Gastrocnemius medialis (tissue), 4 donors: ENCODE measurements at regions of chr18 and their contacts with region 1.

Region 1: DNA sequence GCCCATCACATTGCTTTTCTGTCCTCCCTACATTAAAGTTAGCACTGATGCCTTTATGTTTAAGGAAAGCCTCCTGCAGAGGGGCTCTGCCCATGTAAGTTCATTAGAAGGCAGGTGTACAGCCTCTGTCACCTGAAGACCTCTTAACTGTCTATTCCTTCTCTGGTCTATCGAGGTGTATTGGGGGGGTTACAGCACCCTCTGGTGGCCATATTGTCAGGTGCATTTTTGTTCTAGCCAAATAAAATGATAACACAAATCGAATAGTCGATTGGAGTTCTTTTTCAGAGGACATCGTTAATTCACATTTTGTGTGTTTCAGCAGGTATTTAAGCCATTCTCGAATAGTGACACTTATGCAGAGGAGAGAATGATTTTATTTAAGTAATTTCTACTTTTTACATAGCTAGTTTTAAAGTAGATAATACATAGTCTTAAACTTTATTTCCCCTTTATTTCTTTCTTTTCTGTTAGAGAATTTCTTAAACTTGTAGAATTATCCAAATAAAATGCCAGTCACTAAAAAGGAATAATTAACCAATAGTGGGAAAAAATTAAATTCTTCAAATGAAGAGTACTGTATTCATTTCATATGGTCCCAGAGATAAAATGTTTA is 136.8 kb downstream of the NEDD4L start:
- DNase-seq: peak in 1 of 2 donors; percentile 27
- ATAC-seq: peak; percentile 48 to 52
- H3K4me3 ChIP-seq: no peak overlapping the region
- H3K27ac ChIP-seq: no peak overlapping the region
- H3K4me1 ChIP-seq: peaks cover 9 to 12% of the 10 kb centered on the region in 2 donors
- H3K27me3 ChIP-seq: no peaks in the 10 kb centered on the region
- CTCF ChIP-seq: peak; percentile 62 to 89 (median 75)
- POLR2A ChIP-seq: no peak

Region 2: GRCh38 chr18:58135701-58136331 is 45.0 kb before region 1 on chr18:
- in situ Hi-C with region 1: no loop called
- intact Hi-C with region 1: loop called (anchors 5 kb)
- DNase-seq: no peak
- ATAC-seq: peak in 1 of 2 donors; percentile 30
- H3K4me3 ChIP-seq: no peak overlapping the region
- H3K27ac ChIP-seq: no peak overlapping the region
- H3K4me1 ChIP-seq: no peaks in the 10 kb centered on the region
- H3K27me3 ChIP-seq: no peaks in the 10 kb centered on the region
- CTCF ChIP-seq: peak; percentile 16 to 72 (median 64)
- POLR2A ChIP-seq: no peak

Region 3: DNA sequence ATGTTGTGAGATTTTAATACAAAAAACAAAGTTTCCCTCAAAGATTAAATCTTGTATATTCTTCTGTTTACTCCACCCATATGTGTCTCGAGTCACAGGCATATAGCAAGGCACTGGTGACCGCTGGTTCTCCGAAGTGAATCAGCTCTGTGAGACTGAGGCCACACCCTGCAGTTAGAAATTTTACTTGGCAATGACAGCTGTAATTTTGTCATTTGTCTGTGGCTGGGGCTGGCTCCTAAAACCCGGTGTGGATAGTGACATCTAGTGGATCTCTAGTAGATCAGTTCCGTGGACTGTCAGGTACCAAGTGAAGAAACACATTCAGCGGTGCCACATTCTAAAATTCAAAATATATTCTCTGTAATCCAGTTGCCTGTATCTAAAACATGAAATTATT is 141.1 kb after region 1 on chr18:
- in situ Hi-C with region 1: loop called in 2 of 4 experiments (anchors 10 to 25 kb)
- intact Hi-C with region 1: no loop called
- DNase-seq: peak; percentile 80 to 85
- ATAC-seq: peak; percentile 91 to 98
- H3K4me3 ChIP-seq: peak overlapping the region in 1 of 4 donors; percentile 11
- H3K27ac ChIP-seq: peak overlapping the region; percentile 62 to 85 (median 82)
- H3K4me1 ChIP-seq: peaks cover 26 to 39% of the 10 kb centered on the region in 2 donors
- H3K27me3 ChIP-seq: no peaks in the 10 kb centered on the region
- CTCF ChIP-seq: peak in 4 of 5 experiments; percentile 57 to 74 (median 70)
- POLR2A ChIP-seq: peak; percentile 49 to 51

Region 4: DNA sequence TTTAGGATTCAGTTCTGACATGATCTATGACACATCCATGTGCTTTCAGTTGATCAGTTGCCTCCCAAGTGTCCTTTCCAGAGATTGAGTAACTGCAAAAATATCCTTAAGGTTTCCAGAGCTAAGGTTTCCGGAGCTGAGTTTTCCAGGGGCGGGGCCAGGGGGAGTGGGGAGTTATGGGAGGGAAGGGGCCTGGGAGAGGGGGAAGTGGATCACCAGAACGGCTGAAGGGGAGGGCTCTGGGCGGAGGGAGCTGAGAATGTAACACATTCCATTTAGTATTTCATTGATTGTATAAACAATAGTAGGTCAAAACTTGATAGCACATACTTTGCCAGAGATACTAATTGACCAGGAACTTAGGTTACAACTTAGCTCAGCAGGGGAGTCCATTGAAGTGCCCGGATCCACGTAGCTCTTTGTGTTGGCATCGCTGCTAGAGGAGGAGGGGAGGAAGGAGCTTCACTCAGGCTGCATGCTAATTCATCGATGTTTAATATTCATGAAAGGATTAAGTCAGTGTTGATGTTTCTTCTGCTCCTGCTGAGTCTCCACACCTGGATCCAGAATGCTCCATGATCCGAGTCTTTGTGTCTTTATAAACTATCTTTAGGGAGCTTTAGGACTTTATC is 158.2 kb after region 1 on chr18:
- in situ Hi-C with region 1: loop called in 1 of 4 experiments (anchors 25 kb)
- intact Hi-C with region 1: no loop called
- DNase-seq: no peak
- ATAC-seq: no peak
- H3K4me3 ChIP-seq: no peak overlapping the region
- H3K27ac ChIP-seq: peak overlapping the region in 2 of 4 donors; percentile 57 to 70
- H3K4me1 ChIP-seq: peaks cover 35 to 41% of the 10 kb centered on the region in 2 donors
- H3K27me3 ChIP-seq: no peaks in the 10 kb centered on the region
- CTCF ChIP-seq: no peak
- POLR2A ChIP-seq: no peak